ENCODE measurements at regions of chr7 and their contacts with region 1.

Region 1: DNA sequence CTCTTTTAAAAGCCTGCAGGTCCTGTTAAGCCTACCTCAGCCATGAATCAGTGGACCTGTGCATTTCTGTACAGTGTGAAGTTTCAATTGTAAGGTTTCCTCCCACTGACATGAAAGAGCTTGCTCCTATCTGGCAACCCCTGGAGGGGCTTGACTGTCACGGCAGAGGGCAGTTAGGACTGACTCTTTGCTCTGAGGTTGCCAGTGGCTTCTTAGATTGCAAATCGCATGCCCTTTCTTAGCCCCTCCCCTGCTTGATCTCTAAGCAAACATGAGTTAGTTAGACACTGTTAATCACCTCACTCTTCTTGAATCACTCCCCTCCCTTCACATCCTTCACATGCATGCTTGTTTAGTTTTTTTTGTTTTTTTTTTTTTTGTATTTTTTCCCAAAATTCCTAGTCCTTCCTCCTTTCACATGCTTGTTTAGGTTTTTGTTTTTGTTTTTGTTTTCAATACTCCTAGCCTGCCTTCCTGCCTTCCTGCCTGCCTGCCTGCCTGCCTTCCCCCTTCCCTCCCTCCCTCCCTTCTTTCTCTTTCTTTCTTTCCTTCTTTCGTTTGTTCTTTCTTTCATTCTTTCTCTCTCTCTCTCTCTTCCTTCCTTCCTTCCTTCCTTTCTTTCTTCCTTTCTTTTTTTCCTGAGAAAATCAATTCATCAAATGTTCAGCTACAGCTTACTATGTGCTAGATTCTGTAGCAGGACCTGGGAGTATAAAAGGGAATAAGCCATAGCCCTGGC is 6.0 kb upstream of the HIPK2 start:
- H3K4me3 Mint-ChIP-seq: no peak overlapping the region
- H3K27ac Mint-ChIP-seq: no peak overlapping the region
- H3K4me1 Mint-ChIP-seq: peaks cover under 1% of the 10 kb centered on the region
- H3K27me3 Mint-ChIP-seq: peaks cover 27% of the 10 kb centered on the region

Region 2: DNA sequence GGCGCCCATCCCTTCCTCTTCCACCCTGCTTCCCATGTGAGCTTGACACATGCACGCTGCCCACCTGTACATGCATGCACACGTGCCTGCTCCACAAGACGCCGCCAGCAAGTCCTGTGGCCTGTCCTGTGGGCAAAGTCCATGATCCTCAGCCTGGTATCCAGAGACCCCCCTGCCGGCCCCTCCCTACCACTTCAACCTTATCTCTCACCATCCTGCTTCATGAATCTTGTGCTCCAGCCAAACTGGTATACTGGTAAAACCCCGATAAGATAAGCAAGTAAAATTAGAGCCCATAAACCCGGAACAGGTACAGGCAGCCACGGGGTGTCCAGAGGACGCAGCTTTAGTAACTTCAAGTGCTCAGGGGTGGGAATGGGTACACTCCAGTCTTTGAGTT is 33.4 kb after region 1 on chr7:
- intact Hi-C with region 1: loop called (anchors 5 kb)
- H3K4me3 Mint-ChIP-seq: no peak overlapping the region
- H3K27ac Mint-ChIP-seq: no peak overlapping the region
- H3K4me1 Mint-ChIP-seq: no peaks in the 10 kb centered on the region
- H3K27me3 Mint-ChIP-seq: peaks cover 10% of the 10 kb centered on the region